Activated B cell treated with CpG ODN at 0.5 μM for 24 hours (primary cell): ENCODE measurements at regions of chr14 and their contacts with region 1.

Region 1: GRCh38 chr14:92439537-92440344 is 73.8 kb upstream of the RIN3 start:
- DNase-seq: peak; percentile 32
- ATAC-seq: peak; percentile 73
- H3K4me3 Mint-ChIP-seq: peak overlapping the region; percentile 29
- H3K27ac Mint-ChIP-seq: peak overlapping the region; percentile 31
- H3K4me1 Mint-ChIP-seq: peaks cover 44% of the 10 kb centered on the region
- H3K27me3 Mint-ChIP-seq: no peaks in the 10 kb centered on the region
- CTCF ChIP-seq: no peak

Region 2: DNA sequence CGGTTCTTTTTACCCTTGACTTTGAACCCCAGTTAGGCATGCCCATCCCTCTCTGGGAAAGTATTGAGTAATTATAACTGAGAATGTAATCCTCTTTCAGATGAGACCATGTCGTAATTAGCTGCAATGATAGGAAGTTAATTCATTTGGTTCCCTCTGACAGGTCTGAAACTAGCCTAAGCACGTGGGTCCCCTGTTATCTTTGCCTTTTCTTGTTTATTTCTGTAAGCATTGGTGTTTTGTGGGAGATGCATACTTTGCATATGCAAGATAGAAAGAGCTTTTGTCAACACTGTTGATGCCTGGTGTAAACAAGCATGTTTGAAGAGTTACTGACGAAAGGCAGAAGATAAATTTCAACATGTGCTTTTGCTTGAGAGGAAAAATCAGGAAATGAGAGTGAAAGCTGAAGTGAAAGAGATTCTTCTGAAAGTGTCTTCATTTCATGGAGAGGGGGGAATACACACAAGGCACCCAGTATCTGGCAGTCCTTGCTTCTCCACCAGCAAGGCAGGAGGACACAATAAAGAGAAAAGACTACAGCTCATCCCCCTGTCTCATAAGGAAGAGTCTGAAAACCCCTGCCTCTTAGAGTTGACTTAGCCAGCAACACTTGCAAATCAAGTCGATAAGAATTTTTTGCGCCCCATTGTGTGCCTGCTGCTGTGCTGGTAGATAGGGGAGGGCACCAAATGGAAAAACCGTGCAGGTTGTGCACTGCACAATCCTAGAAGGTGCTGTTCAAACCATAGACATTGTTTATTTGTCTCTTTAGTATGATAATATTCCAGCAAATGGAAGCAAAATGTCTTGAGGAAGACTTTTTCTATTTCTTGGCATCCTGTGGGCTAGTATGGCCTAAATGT is 38.9 kb before region 1 on chr14:
- CTCF ChIA-PET with region 1: no interaction called
- POLR2A ChIA-PET with region 1: interaction called, 5 read pairs
- intact Hi-C with region 1: loop called (anchors 5 kb)
- DNase-seq: no peak
- ATAC-seq: peak; percentile 85
- H3K4me3 Mint-ChIP-seq: peak overlapping the region; percentile 29
- H3K27ac Mint-ChIP-seq: peak overlapping the region; percentile 77
- H3K4me1 Mint-ChIP-seq: peaks cover 32% of the 10 kb centered on the region
- H3K27me3 Mint-ChIP-seq: no peaks in the 10 kb centered on the region
- CTCF ChIP-seq: no peak

Region 3: GRCh38 chr14:92426191-92426590 is 13.6 kb before region 1 on chr14:
- CTCF ChIA-PET with region 1: no interaction called
- POLR2A ChIA-PET with region 1: no interaction called
- intact Hi-C with region 1: no loop called
- DNase-seq: no peak
- ATAC-seq: peak; percentile 34
- H3K4me3 Mint-ChIP-seq: no peak overlapping the region
- H3K27ac Mint-ChIP-seq: no peak overlapping the region
- H3K4me1 Mint-ChIP-seq: peaks cover 9% of the 10 kb centered on the region
- H3K27me3 Mint-ChIP-seq: peaks cover 6% of the 10 kb centered on the region
- CTCF ChIP-seq: no peak